ENCODE measurements at regions of chr3 and their contacts with region 1.

Region 1: GRCh38 chr3:149702691-149703441 is 45.0 kb upstream of the WWTR1 start:
- DNase-seq: no peak
- H3K4me3 Mint-ChIP-seq: no peak overlapping the region
- H3K27ac Mint-ChIP-seq: peak overlapping the region; percentile 71
- H3K4me1 Mint-ChIP-seq: peaks cover 13% of the 10 kb centered on the region
- H3K27me3 Mint-ChIP-seq: no peaks in the 10 kb centered on the region

Region 2: DNA sequence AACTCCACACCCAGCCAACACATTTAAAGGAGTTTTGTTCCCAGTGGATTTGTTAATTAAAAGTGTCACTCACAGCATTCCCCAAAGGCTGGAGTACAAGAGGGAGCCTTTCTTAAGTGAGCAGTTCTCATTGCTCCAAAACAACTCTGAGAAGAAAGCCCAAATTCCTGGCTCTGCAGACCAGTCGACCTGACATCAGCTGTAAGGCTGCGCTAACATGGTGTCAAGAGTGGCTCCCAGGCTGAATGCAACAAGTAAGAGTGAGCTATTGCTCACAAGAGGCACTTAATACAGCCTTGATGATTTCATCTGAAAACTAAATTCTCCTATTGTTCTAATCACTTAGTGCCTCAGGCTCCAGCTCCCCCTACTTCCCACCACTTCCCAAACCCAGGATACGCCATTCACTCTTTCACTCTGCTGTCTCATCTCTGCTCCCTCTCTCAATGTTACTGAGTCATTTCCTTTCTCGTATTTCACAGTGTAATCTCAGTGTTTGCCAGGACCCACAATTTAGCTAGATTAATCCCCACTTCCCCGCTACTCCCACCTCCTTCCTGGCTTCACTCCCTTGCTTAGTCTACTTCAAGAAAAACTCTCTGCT is 126.8 kb before region 1 on chr3:
- intact Hi-C with region 1: loop called (anchors 1 kb)
- DNase-seq: no peak
- H3K4me3 Mint-ChIP-seq: no peak overlapping the region
- H3K27ac Mint-ChIP-seq: no peak overlapping the region
- H3K4me1 Mint-ChIP-seq: peaks cover 45% of the 10 kb centered on the region
- H3K27me3 Mint-ChIP-seq: no peaks in the 10 kb centered on the region

Region 3: DNA sequence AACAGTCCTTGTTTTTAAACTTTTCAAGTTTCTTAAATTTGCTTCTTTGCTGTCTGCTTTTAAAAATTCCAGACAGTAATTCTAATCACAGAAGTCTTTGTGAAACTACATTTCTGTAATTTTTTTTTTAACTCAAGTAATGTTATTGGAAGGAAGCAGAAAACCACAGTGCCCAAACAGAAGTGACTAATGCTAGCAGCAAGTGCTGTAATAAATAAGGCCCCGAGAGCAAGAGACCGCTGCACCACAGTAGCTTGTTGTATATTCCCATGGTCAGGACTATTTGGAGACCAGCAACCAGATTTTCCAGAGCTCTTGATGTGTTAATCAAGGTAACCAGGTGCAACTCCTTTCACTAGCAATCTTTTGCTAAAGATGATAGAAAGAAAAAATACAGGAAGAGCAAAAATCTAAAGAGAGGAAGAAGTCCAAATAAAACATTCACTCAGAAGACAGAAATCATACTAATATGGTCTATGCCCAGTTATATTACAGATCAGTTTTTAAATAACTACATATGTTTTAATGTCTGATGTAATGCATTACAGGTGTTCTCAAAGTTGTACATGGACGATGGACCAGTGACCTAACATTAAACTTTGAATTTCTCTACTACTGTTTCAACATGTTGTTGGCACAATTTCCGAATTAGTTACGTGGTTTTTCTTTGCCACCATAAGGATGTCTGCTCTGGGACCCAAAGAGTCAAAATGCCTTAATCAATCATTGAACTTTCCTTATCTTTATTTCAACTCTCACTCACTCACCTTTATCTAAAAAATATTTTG is 81.5 kb before region 1 on chr3:
- intact Hi-C with region 1: loop called (anchors 1 kb)
- DNase-seq: peak; percentile 62
- H3K4me3 Mint-ChIP-seq: peak overlapping the region; percentile 55
- H3K27ac Mint-ChIP-seq: peak overlapping the region; percentile 37
- H3K4me1 Mint-ChIP-seq: peaks cover 18% of the 10 kb centered on the region
- H3K27me3 Mint-ChIP-seq: peaks cover 13% of the 10 kb centered on the region

Region 4: DNA sequence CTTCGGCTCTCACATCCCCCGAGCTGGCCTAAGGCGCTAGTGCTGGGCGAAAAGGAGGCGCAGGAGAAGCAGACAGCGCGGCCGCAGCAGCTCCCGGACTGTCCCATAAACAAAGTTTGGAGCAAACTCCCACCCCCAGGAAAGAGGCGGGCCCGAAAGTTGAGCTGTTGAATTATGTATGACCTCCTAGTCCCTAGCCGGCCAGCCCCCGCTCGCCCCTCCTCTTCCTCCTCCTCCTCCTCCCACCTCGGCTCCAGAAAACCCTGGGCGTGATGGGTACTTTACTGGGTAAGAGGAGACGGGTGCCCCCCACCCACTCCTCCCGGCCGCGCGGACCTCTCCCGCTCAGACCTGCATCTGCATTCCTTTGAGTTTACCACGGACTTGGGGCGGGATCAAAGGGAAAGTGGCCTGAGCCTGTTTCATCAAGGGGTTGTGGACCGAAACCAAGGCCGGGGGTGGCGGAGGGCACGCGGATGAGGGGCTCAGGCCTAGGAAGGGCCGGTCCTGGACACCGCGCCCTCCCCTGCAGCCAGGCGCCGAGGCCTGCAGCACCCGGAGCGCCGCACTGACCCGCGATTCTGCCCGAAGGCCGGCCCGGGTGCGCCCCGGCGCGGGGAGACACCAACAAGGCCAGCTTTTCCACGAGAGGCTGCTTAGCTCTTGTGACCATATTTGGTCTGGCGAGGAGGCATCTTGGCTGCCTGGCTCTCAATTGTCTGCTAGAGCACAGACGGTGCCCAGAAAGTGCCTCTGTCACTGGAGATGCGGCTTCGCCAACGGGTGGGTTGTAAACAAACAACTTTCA is 44.7 kb before region 1 on chr3 and contains the start of gene WWTR1:
- intact Hi-C with region 1: loop called (anchors 5 kb)
- DNase-seq: peak; percentile 78
- H3K4me3 Mint-ChIP-seq: peak within 1 kb of the TSS; percentile 89
- H3K27ac Mint-ChIP-seq: peak within 1 kb of the TSS; percentile 74
- H3K4me1 Mint-ChIP-seq: peaks cover 13% of the 10 kb centered on the region
- H3K27me3 Mint-ChIP-seq: peaks cover 59% of the 10 kb centered on the region
- total RNA-seq, gene WWTR1: 0.31 and 0.75 TPM in 2 replicates

Region 5: DNA sequence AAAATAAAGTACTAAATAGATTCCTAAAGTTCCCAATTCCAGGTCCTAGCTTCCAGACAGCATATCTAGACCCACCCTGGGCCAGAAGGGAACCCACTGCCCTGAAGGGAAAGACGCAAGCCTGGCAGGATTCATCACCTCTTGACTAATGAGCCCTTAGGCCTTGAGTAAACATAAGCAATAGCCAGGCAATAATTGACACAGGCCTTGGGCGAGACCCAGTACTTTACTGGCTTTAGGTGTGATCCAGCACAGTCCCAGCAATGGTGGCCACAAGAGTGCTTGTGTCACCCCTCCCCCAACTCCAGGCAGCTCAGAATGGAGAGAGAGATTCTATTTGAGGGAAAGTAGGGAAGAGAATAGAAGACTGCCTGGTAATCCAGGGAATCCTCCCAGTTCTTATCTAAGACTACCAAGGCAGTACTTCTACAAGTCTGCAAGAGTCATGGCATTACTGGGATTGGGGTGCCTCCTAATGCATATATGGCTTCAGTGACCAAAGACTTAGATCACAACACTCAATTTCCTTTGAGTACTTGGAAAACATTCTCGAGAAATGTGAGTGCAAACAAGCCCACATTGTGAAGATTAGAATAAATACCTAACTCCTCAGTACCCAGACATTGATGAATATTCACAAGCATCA is 14.6 kb before region 1 on chr3:
- intact Hi-C with region 1: no loop called
- DNase-seq: no peak
- H3K4me3 Mint-ChIP-seq: no peak overlapping the region
- H3K27ac Mint-ChIP-seq: no peak overlapping the region
- H3K4me1 Mint-ChIP-seq: no peaks in the 10 kb centered on the region
- H3K27me3 Mint-ChIP-seq: peaks cover 10% of the 10 kb centered on the region

Region 6: GRCh38 chr3:149726716-149727407 is 24.0 kb after region 1 on chr3:
- intact Hi-C with region 1: loop called (anchors 2 kb)
- DNase-seq: no peak
- H3K4me3 Mint-ChIP-seq: no peak overlapping the region
- H3K27ac Mint-ChIP-seq: no peak overlapping the region
- H3K4me1 Mint-ChIP-seq: no peaks in the 10 kb centered on the region
- H3K27me3 Mint-ChIP-seq: peaks cover 14% of the 10 kb centered on the region

Region 7: GRCh38 chr3:149812606-149813366 is 109.9 kb after region 1 on chr3 and contains the start of gene RNF13:
- intact Hi-C with region 1: loop called (anchors 2 kb)
- DNase-seq: peak; percentile 98
- H3K4me3 Mint-ChIP-seq: peak within 1 kb of the TSS; percentile 97
- H3K27ac Mint-ChIP-seq: peak within 1 kb of the TSS; percentile 100
- H3K4me1 Mint-ChIP-seq: peaks cover 44% of the 10 kb centered on the region
- H3K27me3 Mint-ChIP-seq: peaks cover 11% of the 10 kb centered on the region
- total RNA-seq, gene RNF13: 31.6 and 36.7 TPM in 2 replicates

Region 8: GRCh38 chr3:150546226-150547044 is 843.6 kb after region 1 on chr3 and contains the starts of genes EIF2A and SERP1:
- intact Hi-C with region 1: loop called (anchors 2 kb)
- DNase-seq: peak; percentile 100
- H3K4me3 Mint-ChIP-seq: peak within 1 kb of the TSS; percentile 90
- H3K27ac Mint-ChIP-seq: peak within 1 kb of the TSS; percentile 95
- H3K4me1 Mint-ChIP-seq: peaks cover 51% of the 10 kb centered on the region
- H3K27me3 Mint-ChIP-seq: no peaks in the 10 kb centered on the region
- total RNA-seq, gene EIF2A: 125 and 133 TPM in 2 replicates
- total RNA-seq, gene SERP1: 88.8 and 103 TPM in 2 replicates

Measured in activated CD4-positive, alpha-beta T cell treated with anti-CD3 and anti-CD28 coated beads, Interleukin-2, amount 10 ng/mL, durations not matched to agents 24 days and 14 days (primary cell).